Mammary epithelial cell (primary cell): ENCODE measurements at regions of chr15 and their contacts with region 1.

Region 1: GRCh38 chr15:34927726-34928125 is 41.8 kb downstream of the AQR start:
- DNase-seq: no peak
- H3K4me3 ChIP-seq: no peak overlapping the region
- H3K27ac ChIP-seq: no peak overlapping the region
- H3K4me1 ChIP-seq: no peaks in the 10 kb centered on the region
- H3K27me3 ChIP-seq: no peaks in the 10 kb centered on the region
- CTCF ChIP-seq: no peak

Region 2: GRCh38 chr15:34708422-34708821 is 219.3 kb before region 1 on chr15:
- CTCF ChIA-PET with region 1: no interaction called
- dilution Hi-C with region 1: no loop called
- in situ Hi-C with region 1: loop called in 1 of 2 experiments (anchors 10 kb)
- intact Hi-C with region 1: no loop called
- DNase-seq: peak; percentile 42
- H3K4me3 ChIP-seq: no peak overlapping the region
- H3K27ac ChIP-seq: no peak overlapping the region
- H3K4me1 ChIP-seq: no peaks in the 10 kb centered on the region
- H3K27me3 ChIP-seq: no peaks in the 10 kb centered on the region
- CTCF ChIP-seq: peak; percentile 94 to 95